ENCODE measurements at regions of chr9 and their contacts with region 1.

Region 1: GRCh38 chr9:136902259-136902821 is 16.0 kb downstream of the TRAF2 start:
- DNase-seq: peak; percentile 38 to 91 (median 66)
- ATAC-seq: peak; percentile 93
- H3K4me3 ChIP-seq: peak overlapping the region; percentile 24
- H3K4me3 Mint-ChIP-seq: peak overlapping the region; percentile 62 to 81 (median 75)
- H3K27ac ChIP-seq: peak overlapping the region; percentile 76
- H3K27ac Mint-ChIP-seq: peak overlapping the region; percentile 89 to 98 (median 94)
- H3K4me1 ChIP-seq: peaks cover 26 to 30% of the 10 kb centered on the region in 2 donors
- H3K4me1 Mint-ChIP-seq: peaks cover 12 to 59% (median 36%) of the 10 kb centered on the region in 7 donors
- H3K27me3 ChIP-seq: no peaks in the 10 kb centered on the region
- H3K27me3 Mint-ChIP-seq: no peaks in the 10 kb centered on the region

Region 2: DNA sequence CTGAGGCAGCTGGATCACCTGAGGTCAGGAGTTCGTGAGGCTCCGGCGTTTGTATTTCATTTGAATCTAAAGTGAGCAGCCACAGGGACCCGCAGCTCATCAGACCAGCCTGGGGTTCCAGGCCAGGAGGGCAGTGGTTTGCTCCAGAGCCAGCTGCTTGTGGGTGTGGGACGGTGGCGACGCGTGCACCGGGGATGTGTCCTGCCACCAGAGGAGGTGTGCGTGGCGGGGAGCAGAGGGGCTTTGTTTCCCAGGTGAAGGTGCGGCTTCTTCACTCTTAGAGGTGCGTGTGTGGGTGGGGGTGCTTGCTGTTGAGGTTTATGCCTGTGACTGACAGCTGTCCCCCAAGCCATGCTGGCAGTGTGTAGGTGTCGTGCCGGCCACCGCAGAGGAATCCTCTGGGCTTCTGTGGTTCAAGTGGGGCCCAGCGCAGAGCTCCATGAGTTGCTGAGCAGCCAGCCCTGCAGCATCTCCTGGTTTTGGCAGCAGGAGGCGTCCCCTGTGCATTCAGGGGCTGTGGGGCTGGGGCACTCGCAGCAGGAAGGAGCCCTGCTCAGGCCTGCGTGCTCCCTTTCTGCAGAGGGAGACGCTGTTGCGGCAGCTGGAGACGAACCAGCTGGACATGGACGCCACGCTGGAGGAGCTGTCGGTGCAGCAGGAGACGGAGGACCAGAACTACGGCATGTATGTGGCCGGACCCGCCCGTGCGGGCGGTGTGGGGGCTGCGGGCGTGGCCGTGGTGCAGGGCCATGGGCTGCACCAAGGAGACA is 67.0 kb before region 1 on chr9:
- CTCF ChIA-PET with region 1: no interaction called
- POLR2A ChIA-PET with region 1: no interaction called
- intact Hi-C with region 1: no loop called
- DNase-seq: no peak
- ATAC-seq: no peak
- H3K4me3 ChIP-seq: no peak overlapping the region
- H3K4me3 Mint-ChIP-seq: no peak overlapping the region
- H3K27ac ChIP-seq: no peak overlapping the region
- H3K27ac Mint-ChIP-seq: no peak overlapping the region
- H3K4me1 ChIP-seq: no peaks in the 10 kb centered on the region
- H3K4me1 Mint-ChIP-seq: peaks cover 0 to 5% (median 0%) of the 10 kb centered on the region in 7 donors
- H3K27me3 ChIP-seq: no peaks in the 10 kb centered on the region
- H3K27me3 Mint-ChIP-seq: no peaks in the 10 kb centered on the region

Region 3: GRCh38 chr9:136865735-136866103 is 36.6 kb before region 1 on chr9:
- CTCF ChIA-PET with region 1: no interaction called
- POLR2A ChIA-PET with region 1: no interaction called
- intact Hi-C with region 1: loop called in 1 of 2 experiments (anchors 5 kb)
- DNase-seq: no peak
- ATAC-seq: no peak
- H3K4me3 ChIP-seq: peak overlapping the region; percentile 68
- H3K4me3 Mint-ChIP-seq: peak overlapping the region; percentile 55 to 94 (median 87)
- H3K27ac ChIP-seq: peak overlapping the region; percentile 99
- H3K27ac Mint-ChIP-seq: peak overlapping the region; percentile 36 to 94 (median 87)
- H3K4me1 ChIP-seq: peaks cover 7 to 8% of the 10 kb centered on the region in 2 donors
- H3K4me1 Mint-ChIP-seq: peaks cover 4 to 24% (median 19%) of the 10 kb centered on the region in 7 donors
- H3K27me3 ChIP-seq: no peaks in the 10 kb centered on the region
- H3K27me3 Mint-ChIP-seq: no peaks in the 10 kb centered on the region

Region 4: DNA sequence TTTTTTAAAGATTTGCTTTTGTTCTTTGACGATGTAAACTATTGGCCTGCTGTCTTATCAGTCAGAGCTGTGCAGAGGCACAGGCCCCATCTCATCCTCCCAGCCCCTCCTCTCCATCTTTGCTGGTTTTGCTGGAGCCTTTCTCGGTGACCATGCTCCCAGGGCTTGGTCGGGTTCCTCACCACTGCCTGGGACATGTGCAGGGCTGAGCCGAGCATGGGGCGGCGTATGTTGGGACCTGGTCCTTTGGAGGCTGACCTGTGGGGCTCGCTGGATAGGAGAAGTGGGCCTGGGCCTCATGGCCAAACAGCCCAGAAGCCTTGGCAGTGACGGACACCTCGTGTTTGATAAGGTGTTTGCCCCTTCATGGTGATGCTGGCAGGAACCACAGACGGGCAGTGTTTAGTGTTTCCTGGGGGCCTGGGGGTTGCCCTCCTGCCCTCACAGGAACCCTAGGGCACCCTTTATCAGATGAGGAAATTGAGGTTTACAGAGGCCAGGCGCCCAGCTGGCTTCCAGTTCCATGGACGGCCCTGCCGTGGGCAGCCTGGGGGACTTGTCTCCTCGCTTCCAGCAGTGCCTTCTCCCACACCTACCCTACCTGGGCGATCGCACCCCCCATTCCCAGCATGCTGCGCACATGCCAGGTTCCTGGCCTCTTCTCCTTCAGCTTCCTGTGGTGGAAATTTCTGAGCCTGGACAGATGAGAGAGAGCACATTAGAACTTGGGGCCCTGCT is 11.5 kb after region 1 on chr9:
- CTCF ChIA-PET with region 1: no interaction called
- POLR2A ChIA-PET with region 1: interaction called, 15 read pairs
- intact Hi-C with region 1: no loop called
- DNase-seq: no peak
- ATAC-seq: no peak
- H3K4me3 ChIP-seq: no peak overlapping the region
- H3K4me3 Mint-ChIP-seq: no peak overlapping the region
- H3K27ac ChIP-seq: no peak overlapping the region
- H3K27ac Mint-ChIP-seq: no peak overlapping the region
- H3K4me1 ChIP-seq: no peaks in the 10 kb centered on the region
- H3K4me1 Mint-ChIP-seq: peaks cover 0 to 9% (median 4%) of the 10 kb centered on the region in 7 donors
- H3K27me3 ChIP-seq: no peaks in the 10 kb centered on the region
- H3K27me3 Mint-ChIP-seq: no peaks in the 10 kb centered on the region

Region 5: DNA sequence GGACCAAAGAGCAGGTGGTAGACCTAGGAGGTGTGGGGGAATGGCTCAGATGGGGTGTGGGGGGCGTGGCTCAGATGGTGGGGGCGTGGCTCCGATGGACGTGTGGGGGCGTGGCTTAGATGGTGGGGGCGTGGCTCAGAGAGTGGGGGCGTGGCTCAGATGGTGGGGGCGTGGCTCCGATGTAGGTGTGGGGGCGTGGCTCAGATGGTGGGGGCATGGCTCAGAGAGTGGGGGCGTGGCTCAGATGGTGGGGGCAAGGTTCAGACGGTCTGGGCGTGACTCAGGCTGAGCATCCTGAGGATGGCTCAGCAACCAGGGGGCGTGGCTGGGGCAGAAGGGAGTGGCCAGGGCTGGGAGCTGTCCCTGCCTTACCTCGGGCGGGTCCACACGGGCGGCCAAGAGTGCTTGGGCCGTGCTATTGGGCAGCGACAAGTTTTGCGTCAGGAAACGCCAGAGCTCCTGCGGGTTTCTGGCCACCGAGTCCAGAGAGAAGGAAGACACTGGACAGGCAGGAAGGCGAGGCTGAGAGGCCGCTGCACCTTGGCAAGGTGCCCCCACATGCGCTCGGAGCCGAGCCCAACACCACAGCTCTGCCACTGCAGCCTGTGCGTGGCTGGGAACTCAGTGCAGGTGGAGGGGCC is 119.8 kb after region 1 on chr9:
- CTCF ChIA-PET with region 1: no interaction called
- POLR2A ChIA-PET with region 1: no interaction called
- intact Hi-C with region 1: loop called in 1 of 2 experiments (anchors 5 kb)
- DNase-seq: peak in 5 of 9 donors; percentile 35 to 76 (median 39)
- ATAC-seq: peak; percentile 95
- H3K4me3 ChIP-seq: no peak overlapping the region
- H3K4me3 Mint-ChIP-seq: no peak overlapping the region
- H3K27ac ChIP-seq: no peak overlapping the region
- H3K27ac Mint-ChIP-seq: peak overlapping the region in 3 of 9 donors; percentile 33 to 49 (median 41)
- H3K4me1 ChIP-seq: peaks cover 2 to 9% of the 10 kb centered on the region in 2 donors
- H3K4me1 Mint-ChIP-seq: peaks cover under 1 to 5% (median 2%) of the 10 kb centered on the region in 7 donors
- H3K27me3 ChIP-seq: no peaks in the 10 kb centered on the region
- H3K27me3 Mint-ChIP-seq: peaks cover 0 to under 1% (median 0%) of the 10 kb centered on the region in 5 donors